ENCODE measurements at regions of chr5 and their contacts with region 1.

Region 1: GRCh38 chr5:172188033-172188892 is at the start of gene STK10:
- DNase-seq: peak; percentile 74 to 98 (median 88)

Region 2: DNA sequence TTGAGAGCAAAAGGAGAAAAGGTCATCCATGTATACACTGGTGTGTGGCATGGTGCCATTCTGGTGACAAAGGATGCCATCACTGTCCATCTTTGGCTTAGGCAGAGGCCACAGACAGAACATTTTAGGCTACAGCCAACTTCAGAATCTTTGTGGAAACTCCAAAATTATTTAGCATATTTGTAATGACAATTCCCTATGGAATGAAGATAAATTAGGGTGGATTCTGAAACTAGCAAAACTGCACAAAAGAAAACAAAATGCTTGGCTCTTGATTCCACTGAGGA is 274.3 kb before region 1 on chr5:
- intact Hi-C with region 1: loop called (anchors 5 kb)
- DNase-seq: no peak

Region 3: GRCh38 chr5:172006321-172007174 is 181.7 kb before region 1 on chr5 and contains the start of gene FBXW11:
- intact Hi-C with region 1: loop called (anchors 2 kb)
- DNase-seq: peak; percentile 95 to 100 (median 98)

Region 4: GRCh38 chr5:172106511-172107356 is 81.5 kb before region 1 on chr5:
- intact Hi-C with region 1: loop called (anchors 1 kb)
- DNase-seq: peak in 9 of 10 donors; percentile 56 to 94 (median 75)

Region 5: DNA sequence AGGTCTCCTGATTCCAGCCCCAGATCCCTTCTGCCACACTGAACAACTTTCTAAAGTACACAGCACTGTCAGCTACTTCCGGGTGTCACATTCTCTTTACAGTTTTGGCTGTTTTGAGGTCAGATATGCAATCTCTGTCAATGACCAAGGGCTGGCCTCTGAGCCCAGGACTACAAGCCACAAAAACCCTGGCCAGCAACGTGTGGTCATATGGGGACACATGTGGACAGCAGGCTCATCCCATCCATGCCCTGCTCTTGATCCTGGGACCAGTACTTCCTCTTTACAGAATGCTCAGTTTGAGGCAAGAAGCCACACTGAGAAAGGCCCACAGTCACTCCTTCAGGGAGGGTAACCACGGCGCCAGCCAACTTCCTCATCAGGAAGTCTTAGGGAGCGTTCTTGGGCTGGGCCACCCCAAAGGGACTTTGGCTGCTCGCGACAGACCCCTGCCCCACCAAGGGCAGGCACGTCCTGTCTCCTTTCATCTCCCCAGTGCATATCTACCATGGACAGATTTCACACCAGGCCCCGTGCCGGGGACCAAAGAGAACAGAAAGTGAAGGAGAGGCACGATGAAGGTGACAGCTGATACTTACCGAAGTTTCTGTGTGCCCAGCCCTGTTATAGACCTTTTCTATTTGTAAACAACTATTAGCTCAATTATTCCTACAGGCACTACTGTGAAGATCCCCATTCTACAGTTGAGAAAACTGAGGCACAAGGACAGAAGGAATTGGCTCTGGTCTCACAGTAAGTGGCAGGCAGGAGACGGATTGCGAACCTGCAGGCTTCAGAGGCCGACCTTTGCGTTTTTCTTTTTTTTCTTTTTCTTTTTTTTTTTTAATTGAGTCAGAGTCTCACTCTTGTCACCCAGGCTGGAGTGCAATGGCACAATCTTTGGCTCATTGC is 37.5 kb before region 1 on chr5:
- intact Hi-C with region 1: loop called (anchors 5 kb)
- DNase-seq: peak in 4 of 10 donors; percentile 23 to 87 (median 46)

Region 6: GRCh38 chr5:172283020-172283861 is 95.0 kb after region 1 on chr5 and contains the start of gene UBTD2:
- intact Hi-C with region 1: loop called (anchors 2 kb)
- DNase-seq: peak; percentile 47 to 95 (median 68)

Region 7: GRCh38 chr5:172454358-172455086 is 266.3 kb after region 1 on chr5 and contains the start of gene SH3PXD2B:
- intact Hi-C with region 1: loop called (anchors 10 kb)
- DNase-seq: peak in 6 of 10 donors; percentile 56 to 93 (median 79)

Measured in posterior cingulate gyrus (tissue), 11 donors.